ENCODE measurements at regions of chr4 and their contacts with region 1.

Region 1: DNA sequence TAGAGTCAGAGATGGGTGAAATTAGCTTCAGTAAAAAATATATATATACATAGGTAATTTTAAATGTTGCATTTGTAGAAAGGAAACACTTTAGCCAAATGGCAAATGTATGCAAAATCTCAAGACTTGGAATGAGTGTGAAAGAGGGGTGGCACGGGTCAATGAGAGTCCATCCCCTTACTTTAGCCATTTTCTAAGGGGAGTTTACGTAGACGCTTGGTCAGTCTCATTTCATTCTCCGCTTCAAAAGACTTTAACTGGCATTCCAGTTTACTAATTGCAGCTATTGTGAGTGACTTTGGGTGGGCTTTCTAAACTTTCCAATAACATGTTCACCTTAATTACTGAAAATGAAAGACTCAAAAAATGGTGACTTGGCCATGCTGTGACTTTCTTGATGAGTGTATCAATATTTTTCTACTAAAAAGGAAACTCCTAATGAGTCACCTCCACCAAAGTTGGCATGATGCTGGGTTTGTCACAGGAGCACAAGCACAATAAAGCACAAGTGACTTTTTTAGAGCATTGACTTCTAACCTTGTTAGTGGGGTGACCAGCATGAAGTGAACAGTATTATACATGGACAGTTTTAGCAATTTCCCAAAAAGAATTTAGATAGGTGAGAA is 356.0 kb upstream of the RASGEF1B start:
- DNase-seq: no peak
- H3K4me3 ChIP-seq: no peak overlapping the region
- H3K27ac ChIP-seq: no peak overlapping the region
- H3K4me1 ChIP-seq: no peaks in the 10 kb centered on the region
- H3K27me3 ChIP-seq: no peaks in the 10 kb centered on the region

Region 2: DNA sequence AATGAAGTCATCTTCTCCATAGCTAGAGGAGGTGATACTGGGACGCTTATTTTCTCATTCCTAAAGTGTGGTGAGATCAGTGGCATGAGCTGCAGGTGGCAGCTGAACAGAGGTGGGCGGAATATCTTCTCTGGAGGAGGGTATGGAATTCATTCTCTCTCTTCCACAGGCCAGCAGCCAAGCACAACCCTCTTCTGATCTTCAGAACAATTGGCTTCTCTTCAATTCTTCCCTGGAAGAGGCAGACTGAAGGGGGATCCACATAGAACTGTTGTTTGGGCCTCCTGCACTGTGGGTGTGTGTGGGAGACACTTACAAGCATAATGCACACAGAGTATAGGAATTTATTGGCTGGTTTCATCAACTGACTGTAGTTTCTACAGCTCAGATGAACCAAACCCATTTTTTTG is 175.6 kb before region 1 on chr4:
- CTCF ChIA-PET with region 1: no interaction called
- POLR2A ChIA-PET with region 1: no interaction called
- DNase-seq: no peak
- H3K4me3 ChIP-seq: no peak overlapping the region
- H3K27ac ChIP-seq: no peak overlapping the region
- H3K4me1 ChIP-seq: peaks cover 10 to 44% (median 34%) of the 10 kb centered on the region in 4 experiments
- H3K27me3 ChIP-seq: no peaks in the 10 kb centered on the region

Region 3: DNA sequence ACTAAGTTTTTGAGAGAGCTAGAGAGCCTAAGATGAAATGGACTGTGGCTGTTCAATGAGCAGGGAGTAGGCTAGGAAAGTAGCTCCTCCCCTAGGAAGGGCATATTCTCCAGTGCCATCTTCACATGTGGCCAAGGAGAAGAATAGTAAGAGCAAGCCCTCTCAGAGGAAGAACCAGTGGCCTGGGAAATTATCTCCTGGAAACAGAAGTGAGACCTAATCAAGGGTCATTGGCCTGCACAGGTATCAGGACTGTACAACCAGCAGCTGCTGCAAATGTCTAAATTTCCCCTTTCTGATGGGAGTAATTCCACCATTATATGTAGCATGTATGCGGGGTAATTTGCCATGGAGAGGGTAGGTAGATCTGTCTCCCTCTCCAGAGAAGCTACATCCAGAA is 21.2 kb before region 1 on chr4:
- CTCF ChIA-PET with region 1: no interaction called
- POLR2A ChIA-PET with region 1: no interaction called
- DNase-seq: peak in 2 of 3 donors; percentile 25 to 30
- H3K4me3 ChIP-seq: no peak overlapping the region
- H3K27ac ChIP-seq: no peak overlapping the region
- H3K4me1 ChIP-seq: peaks cover 0 to 13% (median 6%) of the 10 kb centered on the region in 4 experiments
- H3K27me3 ChIP-seq: no peaks in the 10 kb centered on the region

Region 4: GRCh38 chr4:81844717-81845116 is 17.0 kb after region 1 on chr4:
- CTCF ChIA-PET with region 1: interaction called, 12 read pairs
- POLR2A ChIA-PET with region 1: no interaction called
- DNase-seq: peak; percentile 86 to 96 (median 94)
- H3K4me3 ChIP-seq: no peak overlapping the region
- H3K27ac ChIP-seq: no peak overlapping the region
- H3K4me1 ChIP-seq: peaks cover 0 to 8% (median 2%) of the 10 kb centered on the region in 4 experiments
- H3K27me3 ChIP-seq: no peaks in the 10 kb centered on the region

Region 5: DNA sequence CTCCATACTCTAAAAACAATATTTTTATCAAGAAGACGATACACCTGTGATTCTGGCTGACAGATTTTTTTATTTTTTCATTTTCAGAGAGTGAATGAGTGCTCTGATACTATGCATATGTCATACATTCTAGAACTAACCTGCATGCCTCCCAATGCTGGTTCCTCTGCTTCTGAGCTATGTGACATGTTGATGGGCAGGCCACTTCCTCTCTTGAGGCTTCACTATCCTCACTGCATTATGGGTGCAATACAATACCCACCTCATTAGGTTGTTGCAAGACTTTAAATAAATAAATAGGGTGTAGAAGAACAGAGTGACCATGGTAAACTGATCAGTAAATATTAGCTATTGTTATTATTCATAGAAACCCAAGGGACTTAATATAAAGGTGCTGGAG is 137.8 kb after region 1 on chr4:
- CTCF ChIA-PET with region 1: no interaction called
- POLR2A ChIA-PET with region 1: no interaction called
- DNase-seq: no peak
- H3K4me3 ChIP-seq: no peak overlapping the region
- H3K27ac ChIP-seq: no peak overlapping the region
- H3K4me1 ChIP-seq: no peaks in the 10 kb centered on the region
- H3K27me3 ChIP-seq: no peaks in the 10 kb centered on the region

Measured in common myeloid progenitor, CD34-positive (primary cell).